Activated CD4-positive, alpha-beta T cell treated with anti-CD3 and anti-CD28 coated beads, Interleukin-2, amount 10 ng/mL, durations not matched to agents 24 days and 14 days (primary cell): ENCODE measurements at regions of chr17 and their contacts with region 1.

Region 1: DNA sequence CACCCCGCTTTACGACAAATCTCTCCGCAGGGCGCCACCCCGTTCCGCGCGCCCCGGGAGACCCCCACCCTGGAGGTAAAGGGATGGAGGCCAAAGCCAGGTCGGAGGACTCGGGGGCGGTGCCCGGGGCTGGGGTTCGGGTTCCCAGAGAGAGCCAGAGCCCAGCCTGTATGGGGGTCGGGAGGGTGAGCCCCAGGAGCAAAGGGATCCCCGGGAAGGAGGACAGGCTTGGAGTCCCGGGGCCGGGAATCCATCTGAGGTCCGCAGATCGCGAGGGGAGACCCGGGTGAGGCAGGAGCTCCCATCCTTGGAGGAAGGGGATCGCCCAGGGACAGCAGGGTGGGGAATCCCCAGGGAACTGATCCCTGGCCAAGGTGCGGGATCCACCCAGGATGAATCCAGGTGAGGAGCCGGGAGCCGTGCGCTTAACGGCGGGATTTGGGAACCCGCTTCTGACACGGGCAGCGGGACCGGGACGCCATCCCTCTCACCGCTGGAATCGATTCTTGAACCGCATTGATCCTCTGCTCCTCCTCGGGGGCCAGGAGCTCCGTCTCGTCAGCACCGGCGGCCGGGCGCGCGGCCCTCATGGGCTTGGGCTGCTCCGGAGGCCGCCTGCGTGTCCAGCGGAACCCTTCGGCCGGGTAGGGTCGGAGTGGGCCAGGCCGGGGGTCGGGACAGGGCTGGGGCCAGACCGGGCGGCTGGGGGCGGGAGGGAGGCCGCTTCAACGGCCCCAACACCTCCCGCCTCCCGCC is at the start of gene MMD:
- DNase-seq: no peak
- H3K4me3 Mint-ChIP-seq: peak within 1 kb of the TSS; percentile 92
- H3K27ac Mint-ChIP-seq: peak within 1 kb of the TSS; percentile 95
- H3K4me1 Mint-ChIP-seq: peaks cover 47% of the 10 kb centered on the region
- H3K27me3 Mint-ChIP-seq: peaks cover 28% of the 10 kb centered on the region
- total RNA-seq, gene MMD: 21.7 and 23.4 TPM in 2 replicates

Region 2: DNA sequence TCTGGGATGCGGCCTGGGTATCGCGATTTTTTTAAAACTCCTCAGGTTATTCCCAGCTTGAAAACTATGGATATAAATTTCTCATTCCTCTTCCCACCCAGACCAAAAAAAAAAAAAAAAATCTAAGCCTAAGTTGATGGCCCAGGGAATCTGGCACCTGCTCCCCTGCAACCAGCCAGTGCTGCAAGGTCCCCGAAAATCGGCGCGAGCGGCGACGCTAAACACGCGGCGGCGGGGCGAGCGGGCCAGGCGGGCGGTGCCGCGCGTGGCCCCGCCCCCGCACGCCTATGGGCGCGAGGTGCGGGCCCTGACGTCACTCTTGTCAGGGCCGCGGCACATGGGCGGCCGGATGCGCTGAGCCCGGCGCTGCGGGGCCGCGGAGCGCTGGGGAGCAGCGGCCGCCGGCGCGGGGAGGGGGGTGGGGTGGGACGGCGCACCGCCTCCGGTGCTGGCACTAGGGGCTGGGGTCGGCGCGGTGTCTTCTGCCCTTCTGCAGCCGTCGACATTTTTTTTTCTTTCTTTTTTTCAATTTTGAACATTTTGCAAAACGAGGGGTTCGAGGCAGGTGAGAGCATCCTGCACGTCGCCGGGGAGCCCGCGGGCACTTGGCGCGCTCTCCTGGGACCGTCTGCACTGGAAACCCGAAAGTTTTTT is 156.6 kb before region 1 on chr17 and contains the start of gene HLF:
- intact Hi-C with region 1: loop called (anchors 10 kb)
- DNase-seq: peak; percentile 93
- H3K4me3 Mint-ChIP-seq: peak within 1 kb of the TSS; percentile 78
- H3K27ac Mint-ChIP-seq: no peak within 1 kb of the TSS
- H3K4me1 Mint-ChIP-seq: peaks cover 13% of the 10 kb centered on the region
- H3K27me3 Mint-ChIP-seq: peaks cover 77% of the 10 kb centered on the region
- total RNA-seq, gene HLF: 0.92 and 1.3 TPM in 2 replicates

Region 3: GRCh38 chr17:55356434-55357328 is 64.7 kb before region 1 on chr17:
- intact Hi-C with region 1: no loop called
- DNase-seq: peak; percentile 92
- H3K4me3 Mint-ChIP-seq: no peak overlapping the region
- H3K27ac Mint-ChIP-seq: no peak overlapping the region
- H3K4me1 Mint-ChIP-seq: peaks cover 4% of the 10 kb centered on the region
- H3K27me3 Mint-ChIP-seq: peaks cover 33% of the 10 kb centered on the region

Region 4: DNA sequence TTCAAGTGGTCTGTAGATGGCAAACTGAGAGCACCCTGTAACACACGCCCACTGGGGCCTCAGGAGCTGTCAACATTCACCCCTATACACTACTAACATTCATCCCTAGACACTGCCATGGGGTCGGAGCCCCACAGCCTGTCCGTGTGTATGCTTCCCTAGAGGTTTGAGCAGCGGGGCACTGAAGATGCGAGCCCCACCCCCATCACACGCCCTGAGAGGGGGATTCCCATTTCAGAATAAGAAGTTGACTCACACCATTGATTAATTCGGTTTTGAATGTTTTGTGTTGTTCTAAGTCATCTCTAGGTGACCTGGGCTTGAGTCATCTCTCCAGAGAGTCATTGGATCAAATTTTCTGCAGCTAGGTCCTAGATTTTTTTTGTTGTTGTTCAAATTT is 37.6 kb after region 1 on chr17:
- intact Hi-C with region 1: loop called (anchors 1 kb)
- DNase-seq: peak; percentile 63
- H3K4me3 Mint-ChIP-seq: no peak overlapping the region
- H3K27ac Mint-ChIP-seq: peak overlapping the region; percentile 48
- H3K4me1 Mint-ChIP-seq: peaks cover 23% of the 10 kb centered on the region
- H3K27me3 Mint-ChIP-seq: peaks cover 9% of the 10 kb centered on the region

Region 5: DNA sequence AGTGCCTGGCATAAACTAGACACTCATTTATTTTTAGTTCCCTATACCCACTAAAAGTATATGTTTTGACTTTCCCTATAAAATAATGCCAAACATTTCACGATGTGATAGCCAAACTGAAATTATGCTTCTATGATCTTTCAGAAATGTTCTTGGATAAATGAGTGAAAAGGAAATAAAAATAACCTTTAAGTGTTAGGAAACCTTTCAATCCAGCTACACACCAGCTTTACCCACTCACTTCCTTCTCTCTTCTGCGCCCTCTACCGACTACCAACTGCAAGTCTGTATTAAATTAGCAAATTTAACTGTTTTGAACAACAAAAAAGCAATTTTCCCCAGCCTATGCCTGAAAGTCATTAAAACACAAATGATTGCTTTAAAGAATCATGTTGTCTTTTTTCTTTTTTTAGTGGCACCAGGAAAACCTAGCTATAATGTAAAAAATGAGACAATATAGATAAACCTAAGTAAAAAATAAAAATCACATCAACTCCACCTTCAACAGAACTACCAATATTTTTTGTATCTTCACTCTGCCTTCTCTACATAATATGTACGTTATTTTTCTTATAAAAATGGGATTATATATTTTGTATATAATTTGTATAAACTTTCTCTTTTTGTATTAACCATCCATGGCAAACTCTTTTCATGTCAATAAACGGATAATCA is 314.5 kb after region 1 on chr17:
- intact Hi-C with region 1: loop called (anchors 10 kb)
- DNase-seq: peak; percentile 81
- H3K4me3 Mint-ChIP-seq: no peak overlapping the region
- H3K27ac Mint-ChIP-seq: no peak overlapping the region
- H3K4me1 Mint-ChIP-seq: peaks cover 18% of the 10 kb centered on the region
- H3K27me3 Mint-ChIP-seq: peaks cover 31% of the 10 kb centered on the region